ENCODE measurements at regions of chr1 and their contacts with region 1.

Region 1: DNA sequence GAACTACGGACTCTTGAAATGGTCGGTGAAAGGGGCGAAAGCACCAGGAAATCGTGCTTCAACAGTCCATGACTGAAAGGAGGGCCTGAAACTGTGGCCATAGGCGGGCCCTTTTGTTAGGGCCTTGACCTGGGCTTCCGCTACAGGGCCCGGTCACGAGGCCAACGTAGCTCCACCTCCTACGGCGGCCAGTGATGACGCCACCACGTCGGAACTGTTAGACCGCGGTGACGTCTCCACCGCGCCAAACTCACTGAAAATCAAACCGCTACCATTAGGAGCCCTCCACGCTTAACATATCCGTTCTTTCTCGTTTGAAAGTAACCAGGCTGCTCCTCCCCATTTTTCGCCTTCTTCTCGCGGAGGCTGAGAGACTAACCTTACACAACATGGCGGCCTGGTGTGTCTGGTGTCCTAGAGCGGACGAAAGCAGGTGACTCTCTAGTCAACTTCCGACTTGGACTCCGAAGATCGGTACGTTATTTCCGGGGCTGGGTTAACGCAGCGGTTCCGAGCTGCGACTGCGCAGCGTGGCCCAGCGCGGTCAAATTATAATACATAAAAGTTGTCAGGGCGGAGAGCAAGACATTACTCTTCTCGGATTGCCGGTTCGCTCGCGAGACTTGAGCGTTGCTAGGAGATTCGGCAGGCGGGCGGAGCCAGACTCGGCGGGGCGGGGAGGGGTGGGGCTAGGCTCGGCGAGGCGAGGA is 376 bp upstream of the CACYBP start:
- DNase-seq: peak; percentile 95 to 99 (median 96)
- ATAC-seq: peak; percentile 77
- H3K4me3 ChIP-seq: peak overlapping the region; percentile 90
- H3K27ac ChIP-seq: peak overlapping the region; percentile 99
- H3K4me1 ChIP-seq: peaks cover 13 to 31% of the 10 kb centered on the region in 2 experiments; a peak in 4 of 5 replicates
- H3K27me3 ChIP-seq: no peaks in the 10 kb centered on the region
- CTCF ChIP-seq: 0 out of 6 replicates have a peak, but pooled peaks of 1 of the 3 experiments have one; percentile 15
- EP300 ChIP-seq: peak; percentile 71
- POLR2A ChIP-seq: peak; percentile 99
- RAD21 ChIP-seq: no peak

Region 2: GRCh38 chr1:174743654-174744561 is 255.5 kb before region 1 on chr1:
- CTCF ChIA-PET with region 1: no interaction called
- POLR2A ChIA-PET with region 1: interaction called, 11 read pairs
- in situ Hi-C with region 1: no loop called
- intact Hi-C with region 1: no loop called
- DNase-seq: peak; percentile 32 to 55 (median 44)
- ATAC-seq: peak; percentile 40
- H3K4me3 ChIP-seq: no peak overlapping the region
- H3K27ac ChIP-seq: no peak overlapping the region
- H3K4me1 ChIP-seq: peaks cover 4 to 15% of the 10 kb centered on the region in 2 experiments
- H3K27me3 ChIP-seq: no peaks in the 10 kb centered on the region
- CTCF ChIP-seq: peak; percentile 46 to 85 (median 51); a peak in 5 of 6 replicates
- EP300 ChIP-seq: no peak
- POLR2A ChIP-seq: no peak
- RAD21 ChIP-seq: peak; percentile 55 to 64

Region 3: DNA sequence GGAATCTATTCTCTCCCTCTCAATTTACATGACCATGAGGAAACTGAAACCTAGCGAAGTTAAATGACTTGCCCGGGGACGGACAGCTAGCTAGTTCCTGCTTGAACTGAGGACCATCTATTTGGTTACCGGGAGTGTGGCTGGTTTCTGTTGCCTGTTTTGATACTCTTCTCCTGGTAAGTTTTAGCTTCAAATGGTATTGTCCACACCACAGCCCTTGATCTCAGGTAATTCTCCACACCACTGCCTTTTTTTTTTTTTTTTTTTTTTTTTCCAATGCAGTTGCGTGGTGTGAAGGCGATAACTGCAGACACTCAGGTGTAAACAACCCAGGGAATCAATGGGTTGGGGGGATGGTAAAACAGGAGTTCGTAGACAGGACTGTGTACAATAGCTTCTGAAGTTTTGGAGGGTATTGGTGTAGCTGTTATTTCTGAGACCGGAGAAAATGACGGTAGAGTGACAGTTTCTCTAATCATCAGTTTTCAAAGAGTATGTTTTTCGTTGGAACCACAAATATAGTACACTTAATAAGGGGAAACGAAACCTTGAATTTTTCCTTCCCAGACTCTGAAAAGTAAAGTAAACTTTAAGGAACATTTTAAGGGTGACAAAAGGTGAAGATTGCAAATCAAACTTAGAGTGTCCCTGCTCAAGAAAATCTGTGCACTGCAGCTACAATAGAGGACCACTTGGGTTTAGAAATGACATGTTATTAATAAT is 124.9 kb before region 1 on chr1:
- CTCF ChIA-PET with region 1: no interaction called
- POLR2A ChIA-PET with region 1: interaction called, 11 read pairs
- in situ Hi-C with region 1: no loop called
- intact Hi-C with region 1: no loop called
- DNase-seq: no peak
- ATAC-seq: no peak
- H3K4me3 ChIP-seq: no peak overlapping the region
- H3K27ac ChIP-seq: no peak overlapping the region
- H3K4me1 ChIP-seq: peaks cover 7 to 16% of the 10 kb centered on the region in 2 experiments; a peak in 4 of 5 replicates
- H3K27me3 ChIP-seq: no peaks in the 10 kb centered on the region
- CTCF ChIP-seq: no peak
- EP300 ChIP-seq: no peak
- POLR2A ChIP-seq: no peak
- RAD21 ChIP-seq: no peak

Region 4: DNA sequence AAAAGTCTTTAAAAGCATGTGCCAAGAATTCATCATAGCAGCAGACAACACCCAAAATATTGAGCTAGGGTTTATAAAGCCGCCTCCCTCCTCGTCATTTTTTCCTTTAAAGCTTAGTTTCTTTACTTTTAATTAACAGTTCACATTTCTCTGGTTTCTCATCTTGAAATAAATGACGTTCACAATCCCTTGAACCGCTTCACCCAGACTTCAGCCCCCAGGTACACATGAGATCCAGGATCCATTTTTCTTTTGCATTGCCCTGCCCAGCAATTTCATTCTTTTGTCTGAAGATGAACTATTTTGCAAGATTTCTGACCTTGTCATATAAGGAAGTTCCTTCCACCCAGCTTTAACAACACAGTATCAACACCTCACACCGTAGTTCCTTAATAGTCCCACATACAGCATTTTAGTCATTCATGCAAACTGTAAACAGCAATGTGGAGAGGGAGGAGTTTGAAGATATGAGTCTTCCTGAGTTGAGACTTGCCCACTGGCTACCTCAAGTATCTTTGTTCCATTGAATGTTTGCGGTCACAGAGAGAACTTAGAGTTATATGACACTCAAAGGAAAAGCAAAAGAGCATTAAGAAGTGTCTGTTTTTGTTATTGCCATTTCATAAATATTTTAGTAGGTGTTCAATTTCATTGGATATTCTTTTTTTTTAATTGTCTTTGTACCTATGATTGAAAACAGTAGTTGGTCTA is 35.0 kb before region 1 on chr1:
- CTCF ChIA-PET with region 1: no interaction called
- POLR2A ChIA-PET with region 1: interaction called, 4 read pairs
- in situ Hi-C with region 1: no loop called
- intact Hi-C with region 1: loop called (anchors 2 kb)
- DNase-seq: peak; percentile 22 to 90 (median 52)
- ATAC-seq: peak; percentile 90
- H3K4me3 ChIP-seq: peak overlapping the region; percentile 9; the same call in 1 of the 2 replicates
- H3K27ac ChIP-seq: peak overlapping the region; percentile 88
- H3K4me1 ChIP-seq: peaks cover 3 to 51% of the 10 kb centered on the region in 2 experiments; a peak in 4 of 5 replicates
- H3K27me3 ChIP-seq: no peaks in the 10 kb centered on the region
- CTCF ChIP-seq: no peak
- EP300 ChIP-seq: peak; percentile 79
- POLR2A ChIP-seq: 0 out of 2 replicates have a peak, but pooled peaks have one; percentile 28
- RAD21 ChIP-seq: no peak

Region 5: DNA sequence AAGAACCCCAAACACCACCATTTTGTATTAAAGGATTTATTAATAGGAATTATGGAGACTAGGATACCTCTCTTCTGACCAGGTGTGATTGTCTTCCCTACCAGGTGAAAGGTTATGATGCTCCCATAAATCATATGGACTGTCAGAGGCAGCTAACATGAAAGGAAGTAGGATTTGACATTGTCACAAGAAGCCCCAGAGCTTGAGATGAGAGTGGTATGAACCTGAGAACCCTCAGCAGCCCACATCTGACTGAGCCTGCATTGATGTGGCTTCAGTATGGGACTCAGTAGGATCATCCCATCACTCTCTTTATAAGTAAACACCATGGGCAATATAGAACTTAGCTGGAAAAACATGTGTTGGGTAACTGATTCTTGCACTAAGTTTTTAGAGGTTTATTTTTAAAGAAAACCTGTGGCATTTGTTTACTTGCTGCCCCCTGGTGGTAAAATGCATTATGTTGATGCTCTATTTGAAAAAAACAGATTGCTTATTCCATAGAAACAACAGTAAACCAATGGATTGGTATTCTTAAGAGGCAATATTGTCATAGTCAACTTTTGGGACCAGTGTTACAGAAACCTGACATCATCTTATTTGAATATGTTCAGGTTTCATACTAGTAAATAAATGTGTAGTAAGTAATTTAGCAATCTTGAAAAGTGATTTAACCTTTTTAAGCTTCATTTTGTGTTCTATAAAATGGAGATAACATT is 16.2 kb before region 1 on chr1:
- CTCF ChIA-PET with region 1: no interaction called
- POLR2A ChIA-PET with region 1: interaction called, 60 read pairs
- in situ Hi-C with region 1: no loop called
- intact Hi-C with region 1: no loop called
- DNase-seq: peak; percentile 43 to 74 (median 48)
- ATAC-seq: peak; percentile 43; the same call in 2 of the 3 replicates
- H3K4me3 ChIP-seq: no peak overlapping the region
- H3K27ac ChIP-seq: no peak overlapping the region
- H3K4me1 ChIP-seq: no peaks in the 10 kb centered on the region
- H3K27me3 ChIP-seq: no peaks in the 10 kb centered on the region
- CTCF ChIP-seq: peak; percentile 48 to 82 (median 68); a peak in 4 of 6 replicates
- EP300 ChIP-seq: no peak
- POLR2A ChIP-seq: no peak
- RAD21 ChIP-seq: peak; percentile 75 to 91

Region 6: DNA sequence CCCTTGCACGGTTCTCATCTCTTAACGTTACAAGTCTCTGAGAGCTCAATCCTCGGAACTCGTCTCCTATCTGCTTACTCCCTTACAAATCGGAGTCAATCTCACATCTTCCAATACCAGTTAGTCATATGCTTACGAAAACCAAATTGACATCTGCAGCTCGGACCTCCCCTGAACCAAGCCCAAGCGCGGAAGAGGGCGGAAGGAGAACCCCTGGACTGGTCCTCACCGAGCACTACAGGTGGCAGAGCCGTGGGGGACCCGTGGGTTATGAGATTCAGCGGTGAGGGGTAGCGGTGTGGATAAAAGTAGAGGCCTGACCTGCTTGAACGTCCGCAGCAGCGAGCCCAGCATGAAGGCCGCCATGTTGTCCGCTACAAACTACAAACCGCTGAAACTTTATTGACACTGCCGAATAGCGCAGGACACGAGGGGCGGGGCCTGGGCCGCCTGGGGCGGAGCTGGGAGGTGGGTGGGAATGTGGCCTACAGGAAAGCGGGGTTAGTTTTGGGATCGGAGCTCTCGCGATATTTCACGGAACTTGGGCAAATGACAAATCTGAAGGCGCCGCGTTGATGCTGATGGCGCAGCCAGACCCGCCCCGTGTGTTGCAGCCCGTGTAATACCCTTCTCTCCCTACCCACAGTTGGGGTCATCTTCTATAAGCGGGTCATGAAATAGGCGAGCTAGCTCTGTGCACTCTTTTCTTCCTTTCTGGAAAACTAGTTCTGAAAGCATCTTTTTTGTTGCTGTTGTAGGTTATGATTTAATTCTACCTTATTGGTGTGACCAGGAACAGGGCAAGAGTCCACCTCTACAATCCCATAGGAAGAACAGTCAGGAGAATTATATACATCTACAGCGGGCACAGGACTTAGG is 23.9 kb after region 1 on chr1 and contains the start of gene MRPS14:
- CTCF ChIA-PET with region 1: no interaction called
- POLR2A ChIA-PET with region 1: interaction called, 65 read pairs
- in situ Hi-C with region 1: no loop called
- intact Hi-C with region 1: loop called (anchors 1 kb)
- DNase-seq: peak; percentile 97 to 100 (median 98)
- ATAC-seq: peak; percentile 97
- H3K4me3 ChIP-seq: peak within 1 kb of the TSS; percentile 79
- H3K27ac ChIP-seq: peak within 1 kb of the TSS; percentile 83
- H3K4me1 ChIP-seq: peaks cover 4 to 11% of the 10 kb centered on the region in 2 experiments; a peak in 4 of 5 replicates
- H3K27me3 ChIP-seq: no peaks in the 10 kb centered on the region
- CTCF ChIP-seq: no peak; a peak in 2 of 6 replicates
- EP300 ChIP-seq: no peak; the same call in none of the 2 replicates
- POLR2A ChIP-seq: peak; percentile 96
- RAD21 ChIP-seq: no peak
- polyA plus RNA-seq, gene MRPS14: 215 to 231 TPM

Region 7: GRCh38 chr1:175690298-175690697 is 690.9 kb after region 1 on chr1:
- CTCF ChIA-PET with region 1: no interaction called
- POLR2A ChIA-PET with region 1: no interaction called
- in situ Hi-C with region 1: no loop called
- intact Hi-C with region 1: no loop called
- DNase-seq: no peak
- ATAC-seq: no peak
- H3K4me3 ChIP-seq: no peak overlapping the region
- H3K27ac ChIP-seq: no peak overlapping the region
- H3K4me1 ChIP-seq: no peaks in the 10 kb centered on the region
- H3K27me3 ChIP-seq: peaks cover 0 to 6% of the 10 kb centered on the region in 2 experiments; a peak in 3 of 5 replicates
- CTCF ChIP-seq: no peak
- EP300 ChIP-seq: no peak
- POLR2A ChIP-seq: no peak
- RAD21 ChIP-seq: no peak